ENCODE measurements at regions of chr20 and their contacts with region 1.

Region 1: GRCh38 chr20:41339507-41340326 is 904 bp upstream of the LPIN3 start:
- DNase-seq: peak; percentile 90
- H3K4me3 ChIP-seq: peak overlapping the region; percentile 9 to 43 (median 36)
- H3K27ac ChIP-seq: peak overlapping the region; percentile 68 to 80 (median 74)
- H3K4me1 ChIP-seq: peaks cover 0 to 31% (median 20%) of the 10 kb centered on the region in 4 donors
- H3K27me3 ChIP-seq: no peaks in the 10 kb centered on the region
- CTCF ChIP-seq: peak; percentile 99 to 100 (median 99)
- EP300 ChIP-seq: no peak
- POLR2A ChIP-seq: no peak

Region 2: GRCh38 chr20:41232973-41233926 is 106.5 kb before region 1 on chr20:
- intact Hi-C with region 1: loop called (anchors 5 kb)
- DNase-seq: no peak
- H3K4me3 ChIP-seq: no peak overlapping the region
- H3K27ac ChIP-seq: peak overlapping the region; percentile 59 to 75 (median 62)
- H3K4me1 ChIP-seq: peaks cover 0 to 46% (median 40%) of the 10 kb centered on the region in 4 donors
- H3K27me3 ChIP-seq: no peaks in the 10 kb centered on the region
- CTCF ChIP-seq: no peak
- EP300 ChIP-seq: no peak
- POLR2A ChIP-seq: no peak

Region 3: DNA sequence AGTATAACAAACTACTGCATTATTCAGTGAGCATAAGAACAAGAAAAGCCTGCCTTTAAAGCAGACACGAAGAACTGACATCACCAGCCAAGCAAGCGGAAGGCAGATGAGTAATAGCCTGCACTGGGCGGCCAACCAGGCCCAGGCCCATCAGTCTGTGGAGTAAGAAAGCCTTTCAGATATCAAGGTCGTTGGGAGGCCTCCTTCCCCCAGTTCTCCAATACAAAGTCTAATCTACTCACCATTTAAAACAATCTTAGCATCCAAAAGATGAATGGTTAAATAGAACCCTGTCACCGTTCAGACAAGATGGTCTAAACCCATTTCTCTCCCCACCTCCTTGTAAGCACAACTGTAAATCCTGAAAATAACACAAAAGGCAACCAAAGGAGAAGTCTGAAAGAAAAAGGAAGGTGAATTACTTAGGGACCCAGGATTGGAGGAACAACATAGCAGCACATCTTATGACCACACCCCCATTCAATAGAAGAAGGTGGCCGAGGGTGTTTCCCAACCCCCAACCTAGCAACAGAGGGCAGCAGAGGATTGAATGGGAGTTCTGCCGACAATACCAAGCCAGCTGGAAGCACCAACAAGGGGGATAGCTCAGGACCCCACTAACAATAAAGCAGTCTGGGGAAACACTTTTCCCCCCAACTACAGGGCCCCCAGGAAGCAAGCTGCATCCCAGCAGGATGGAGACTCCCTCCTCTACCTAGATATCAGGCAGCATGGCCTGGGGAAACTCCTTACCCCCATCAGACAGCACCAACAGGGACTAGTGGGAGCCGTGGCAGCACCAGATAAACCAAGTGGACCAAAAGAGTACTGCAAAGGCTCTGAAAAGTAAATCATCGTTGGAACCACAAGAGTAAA is 90.1 kb before region 1 on chr20:
- intact Hi-C with region 1: loop called (anchors 5 kb)
- DNase-seq: peak; percentile 92
- H3K4me3 ChIP-seq: no peak overlapping the region
- H3K27ac ChIP-seq: peak overlapping the region; percentile 85 to 93 (median 91)
- H3K4me1 ChIP-seq: peaks cover 0 to 71% (median 64%) of the 10 kb centered on the region in 4 donors
- H3K27me3 ChIP-seq: no peaks in the 10 kb centered on the region
- CTCF ChIP-seq: peak in 1 of 4 experiments; percentile 27
- EP300 ChIP-seq: peak in 1 of 4 donors; percentile 26
- POLR2A ChIP-seq: no peak

Region 4: DNA sequence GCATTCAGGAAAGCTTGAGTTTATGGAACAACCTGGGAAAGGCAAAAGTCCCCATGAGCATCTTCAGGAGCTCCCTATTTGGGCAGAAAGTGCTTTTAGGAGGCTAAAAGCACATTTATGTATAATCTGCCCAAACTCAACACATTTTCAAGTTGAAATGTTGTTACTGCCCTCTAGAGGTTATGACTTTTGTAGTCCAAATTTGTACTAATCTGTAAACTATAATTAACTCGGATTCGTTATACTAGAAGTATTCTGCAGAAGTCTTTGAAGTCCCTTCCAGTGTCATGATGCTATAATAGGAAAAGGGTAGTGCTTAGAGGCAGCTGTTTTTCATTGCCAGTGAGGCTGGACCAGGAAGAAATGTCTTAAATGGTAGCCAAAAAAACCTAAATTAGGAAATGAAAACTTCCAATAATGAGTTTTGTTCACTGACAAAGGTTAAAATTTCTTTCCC is 71.7 kb after region 1 on chr20:
- intact Hi-C with region 1: loop called (anchors 2 kb)
- DNase-seq: no peak
- H3K4me3 ChIP-seq: no peak overlapping the region
- H3K27ac ChIP-seq: peak overlapping the region in 3 of 4 donors; percentile 11 to 46 (median 30)
- H3K4me1 ChIP-seq: peaks cover 0 to 7% (median 0%) of the 10 kb centered on the region in 4 donors
- H3K27me3 ChIP-seq: no peaks in the 10 kb centered on the region
- CTCF ChIP-seq: peak in 1 of 4 experiments; percentile 25
- EP300 ChIP-seq: no peak
- POLR2A ChIP-seq: no peak